ENCODE measurements at regions of chr2 and their contacts with region 1.

Region 1: DNA sequence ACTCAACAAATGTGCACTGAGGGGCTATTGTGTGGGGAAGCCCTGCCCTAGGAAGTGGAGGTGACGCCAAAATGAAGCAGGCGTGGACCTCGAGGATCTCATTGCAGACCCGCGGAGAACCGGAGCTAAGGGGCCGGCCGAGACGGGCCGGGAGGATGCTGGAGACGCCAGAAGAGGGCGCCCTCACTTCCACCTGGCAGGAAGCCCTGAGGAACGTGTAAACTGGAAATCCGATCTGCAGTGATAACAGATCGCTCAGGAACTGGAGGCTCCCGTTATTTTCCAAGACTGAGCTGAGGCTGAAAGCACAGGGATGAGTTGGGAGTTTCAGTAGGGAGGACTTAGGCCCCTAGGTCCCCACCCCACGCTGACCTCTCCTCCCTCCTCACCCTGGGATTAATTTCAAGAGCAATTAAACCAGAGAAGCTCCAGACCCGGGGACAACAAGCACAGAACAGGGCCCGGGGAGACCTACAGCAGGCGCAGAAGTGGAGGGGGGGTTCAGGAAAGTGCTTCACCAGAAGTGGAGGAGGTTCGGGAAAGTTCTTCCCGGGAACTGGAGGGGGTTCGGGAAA is 7.7 kb upstream of the COL6A3 start:
- DNase-seq: peak; percentile 76
- H3K4me3 ChIP-seq: no peak overlapping the region
- H3K27ac ChIP-seq: no peak overlapping the region
- H3K4me1 ChIP-seq: peaks cover 5% of the 10 kb centered on the region
- H3K27me3 ChIP-seq: peaks cover 20 to 23% of the 10 kb centered on the region in 2 experiments
- CTCF ChIP-seq: peak; percentile 84 to 85
- POLR2A ChIP-seq: no peak

Region 2: GRCh38 chr2:237045432-237045831 is 376.2 kb before region 1 on chr2:
- CTCF ChIA-PET with region 1: no interaction called
- POLR2A ChIA-PET with region 1: no interaction called
- dilution Hi-C with region 1: no loop called
- intact Hi-C with region 1: no loop called
- DNase-seq: no peak
- H3K4me3 ChIP-seq: no peak overlapping the region
- H3K27ac ChIP-seq: no peak overlapping the region
- H3K4me1 ChIP-seq: peaks cover 19% of the 10 kb centered on the region
- H3K27me3 ChIP-seq: no peaks in the 10 kb centered on the region
- CTCF ChIP-seq: no peak
- POLR2A ChIP-seq: no peak

Region 3: GRCh38 chr2:237092920-237093781 is 328.5 kb before region 1 on chr2:
- CTCF ChIA-PET with region 1: interaction called, 18 read pairs
- POLR2A ChIA-PET with region 1: no interaction called
- dilution Hi-C with region 1: no loop called
- intact Hi-C with region 1: loop called (anchors 1 kb)
- DNase-seq: peak; percentile 84
- H3K4me3 ChIP-seq: peak overlapping the region in 1 of 3 experiments; percentile 8
- H3K27ac ChIP-seq: peak overlapping the region; percentile 56
- H3K4me1 ChIP-seq: peaks cover 67% of the 10 kb centered on the region
- H3K27me3 ChIP-seq: no peaks in the 10 kb centered on the region
- CTCF ChIP-seq: peak; percentile 50 to 65
- POLR2A ChIP-seq: no peak

Region 4: GRCh38 chr2:237128026-237128703 is 293.5 kb before region 1 on chr2:
- CTCF ChIA-PET with region 1: interaction called, 10 read pairs
- POLR2A ChIA-PET with region 1: no interaction called
- dilution Hi-C with region 1: no loop called
- intact Hi-C with region 1: no loop called
- DNase-seq: peak; percentile 98
- H3K4me3 ChIP-seq: no peak overlapping the region
- H3K27ac ChIP-seq: peak overlapping the region; percentile 21
- H3K4me1 ChIP-seq: peaks cover 11% of the 10 kb centered on the region
- H3K27me3 ChIP-seq: no peaks in the 10 kb centered on the region
- CTCF ChIP-seq: peak; percentile 6 to 17
- POLR2A ChIP-seq: no peak

Region 5: DNA sequence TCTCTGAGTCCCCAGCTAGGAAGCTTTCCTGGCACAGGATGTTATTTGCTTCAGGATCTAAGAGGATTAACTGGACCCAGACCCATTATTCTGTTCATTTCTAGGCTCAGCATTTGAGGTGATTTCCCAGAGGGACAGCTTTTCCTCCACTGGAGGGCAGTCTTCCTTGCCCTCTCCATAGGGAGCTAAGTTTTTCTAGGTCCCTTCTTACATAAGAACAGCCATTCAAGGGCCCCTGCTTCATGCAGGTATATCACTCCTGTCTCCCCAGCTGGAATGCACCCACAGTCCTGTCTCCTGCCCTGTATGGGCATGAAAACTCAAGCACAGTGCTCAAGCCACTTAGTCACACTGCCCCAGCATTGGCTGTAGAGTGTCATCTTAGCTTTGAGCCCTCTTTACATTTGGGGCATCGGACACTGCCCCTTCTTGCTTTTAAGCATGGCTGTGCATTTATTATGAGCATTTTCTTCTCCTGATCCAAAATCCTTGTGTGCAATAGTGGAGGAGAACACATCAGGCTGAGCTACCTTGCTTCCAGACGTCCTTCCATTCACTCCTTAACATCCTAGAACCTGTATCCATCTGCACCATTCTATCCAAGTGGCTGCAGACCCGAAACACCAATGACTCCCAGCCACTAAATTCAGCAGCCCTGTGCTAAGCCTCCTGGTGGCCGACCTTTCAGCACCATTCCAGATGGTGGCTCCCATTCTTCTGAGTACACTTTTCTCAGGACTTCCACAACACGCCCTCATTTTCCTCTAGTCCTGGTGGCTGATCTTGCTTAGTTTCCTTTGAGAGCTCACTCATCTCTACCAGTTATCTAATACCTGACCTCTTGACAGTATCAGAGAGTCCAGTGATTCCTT is 256.0 kb before region 1 on chr2:
- CTCF ChIA-PET with region 1: interaction called, 17 read pairs
- POLR2A ChIA-PET with region 1: no interaction called
- dilution Hi-C with region 1: no loop called
- intact Hi-C with region 1: no loop called
- DNase-seq: peak; percentile 49
- H3K4me3 ChIP-seq: no peak overlapping the region
- H3K27ac ChIP-seq: no peak overlapping the region
- H3K4me1 ChIP-seq: no peaks in the 10 kb centered on the region
- H3K27me3 ChIP-seq: peaks cover 0 to 6% of the 10 kb centered on the region in 2 experiments
- CTCF ChIP-seq: peak; percentile 54 to 68
- POLR2A ChIP-seq: no peak

Region 6: DNA sequence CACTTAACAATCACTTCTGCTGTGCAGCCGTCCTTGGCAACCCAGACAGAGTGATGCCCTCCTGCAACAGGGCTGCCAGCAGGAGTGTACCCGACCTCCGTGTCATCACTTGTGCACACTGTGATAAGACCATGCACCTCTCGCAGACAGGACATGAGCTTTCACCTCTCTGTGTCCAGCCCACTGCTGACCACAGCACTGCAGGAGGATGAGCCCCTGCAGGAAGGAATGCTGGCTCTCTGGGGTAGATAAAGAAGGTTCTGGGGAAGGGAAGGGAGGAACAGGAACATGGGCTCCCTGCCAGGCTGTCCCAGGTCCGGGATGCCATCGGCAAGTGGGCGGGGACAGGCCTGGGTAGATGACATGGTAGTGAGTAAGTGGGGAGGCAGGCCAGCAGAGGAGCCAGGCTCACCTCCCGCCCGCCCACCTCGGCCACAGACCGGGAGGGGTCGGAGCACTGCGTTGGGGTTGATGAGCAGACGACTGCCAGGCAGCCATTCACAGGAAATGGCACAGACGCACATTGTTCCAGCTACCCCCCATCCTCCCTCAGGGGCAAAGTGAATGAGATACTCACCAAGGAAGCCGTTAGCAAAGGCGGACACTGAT is 11.0 kb after region 1 on chr2:
- CTCF ChIA-PET with region 1: interaction called, 15 read pairs
- POLR2A ChIA-PET with region 1: no interaction called
- dilution Hi-C with region 1: no loop called
- intact Hi-C with region 1: no loop called
- DNase-seq: no peak
- H3K4me3 ChIP-seq: no peak overlapping the region
- H3K27ac ChIP-seq: no peak overlapping the region
- H3K4me1 ChIP-seq: peaks cover 8% of the 10 kb centered on the region
- H3K27me3 ChIP-seq: peaks cover 7 to 15% of the 10 kb centered on the region in 2 experiments
- CTCF ChIP-seq: no peak
- POLR2A ChIP-seq: no peak

Region 7: DNA sequence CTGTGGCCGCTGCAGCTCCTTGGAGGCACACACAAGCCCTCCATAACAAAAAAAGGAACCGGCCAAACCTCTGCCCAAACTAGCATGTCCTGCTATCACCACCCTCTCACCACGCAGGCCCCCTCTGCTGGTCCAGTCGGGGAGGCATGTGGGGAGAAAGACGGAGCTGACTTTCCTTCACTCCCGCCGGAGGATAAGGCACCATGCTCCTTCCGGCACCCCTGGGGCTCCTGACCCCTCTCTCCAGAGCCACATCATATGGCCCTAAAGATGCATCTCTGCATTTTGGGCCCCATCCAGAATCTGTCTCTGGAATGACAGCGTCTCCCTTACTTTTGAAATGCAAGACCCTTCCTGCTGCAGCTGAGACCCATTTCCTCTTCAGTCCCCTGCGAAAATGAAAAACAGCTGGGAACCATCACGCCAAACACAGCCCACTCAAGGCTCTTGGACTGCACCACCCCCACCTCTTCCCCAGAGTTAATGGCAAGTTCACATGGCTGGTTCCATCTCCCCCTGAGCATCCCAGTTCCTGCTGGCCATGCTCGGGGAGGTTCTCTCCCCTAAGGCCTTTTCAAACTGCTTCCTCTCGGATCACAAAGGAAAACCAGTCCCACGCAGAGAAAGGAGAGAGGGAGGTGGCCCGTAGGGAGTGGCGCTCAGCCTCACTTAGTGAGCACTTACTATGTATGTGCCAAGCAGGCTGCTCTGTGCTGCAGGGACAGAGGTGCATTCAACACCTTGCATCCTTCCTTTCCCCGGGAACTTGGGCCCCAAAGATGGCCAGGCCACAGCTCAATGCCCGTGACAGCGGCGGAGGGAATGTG is 30.2 kb after region 1 on chr2:
- CTCF ChIA-PET with region 1: interaction called, 17 read pairs
- POLR2A ChIA-PET with region 1: interaction called, 4 read pairs
- dilution Hi-C with region 1: no loop called
- intact Hi-C with region 1: loop called (anchors 2 kb)
- DNase-seq: no peak
- H3K4me3 ChIP-seq: no peak overlapping the region
- H3K27ac ChIP-seq: no peak overlapping the region
- H3K4me1 ChIP-seq: peaks cover 11% of the 10 kb centered on the region
- H3K27me3 ChIP-seq: peaks cover 63 to 72% of the 10 kb centered on the region in 2 experiments
- CTCF ChIP-seq: no peak
- POLR2A ChIP-seq: no peak

Region 8: GRCh38 chr2:237474931-237475703 is 53.5 kb after region 1 on chr2:
- CTCF ChIA-PET with region 1: interaction called, 110 read pairs
- POLR2A ChIA-PET with region 1: no interaction called
- dilution Hi-C with region 1: no loop called
- intact Hi-C with region 1: loop called (anchors 1 kb)
- DNase-seq: peak; percentile 54
- H3K4me3 ChIP-seq: peak overlapping the region; percentile 38 to 51 (median 40)
- H3K27ac ChIP-seq: peak overlapping the region; percentile 23
- H3K4me1 ChIP-seq: peaks cover 12% of the 10 kb centered on the region
- H3K27me3 ChIP-seq: peaks cover 36 to 42% of the 10 kb centered on the region in 2 experiments
- CTCF ChIP-seq: peak; percentile 73 to 93
- POLR2A ChIP-seq: peak; percentile 23

Measured in endothelial cell of umbilical vein (primary cell).